Gastrocnemius medialis (tissue), 4 donors: ENCODE measurements at regions of chr11 and their contacts with region 1.

Region 1: GRCh38 chr11:8813658-8814057 is 97.3 kb upstream of the AKIP1 start:
- DNase-seq: peak; percentile 48 to 69
- ATAC-seq: peak; percentile 47 to 75
- H3K4me3 ChIP-seq: no peak overlapping the region
- H3K27ac ChIP-seq: peak overlapping the region; percentile 17 to 57 (median 50)
- H3K4me1 ChIP-seq: peaks cover 24 to 39% of the 10 kb centered on the region in 2 donors
- H3K27me3 ChIP-seq: no peaks in the 10 kb centered on the region
- CTCF ChIP-seq: peak; percentile 71 to 86 (median 76)
- POLR2A ChIP-seq: no peak

Region 2: GRCh38 chr11:8263769-8264410 is 549.8 kb before region 1 on chr11 and contains the start of gene LMO1:
- in situ Hi-C with region 1: no loop called
- intact Hi-C with region 1: loop called (anchors 10 kb)
- DNase-seq: peak; percentile 65 to 72
- ATAC-seq: peak; percentile 50 to 64
- H3K4me3 ChIP-seq: peak within 1 kb of the TSS; percentile 52 to 70 (median 58)
- H3K27ac ChIP-seq: peak within 1 kb of the TSS; percentile 78 to 88 (median 81)
- H3K4me1 ChIP-seq: peaks cover 28 to 35% of the 10 kb centered on the region in 2 donors
- H3K27me3 ChIP-seq: peaks cover 24 to 32% (median 28%) of the 10 kb centered on the region in 3 donors
- CTCF ChIP-seq: peak; percentile 73 to 96 (median 88)
- POLR2A ChIP-seq: peak in 1 of 2 donors; percentile 31
- total RNA-seq, gene LMO1: 2.2 to 7.0 (median 2.5) TPM

Region 3: GRCh38 chr11:8682303-8683114 is 131.1 kb before region 1 on chr11 and contains the starts of genes RPL27A and TRIM66:
- in situ Hi-C with region 1: loop called in 3 of 4 experiments (anchors 5 to 25 kb)
- intact Hi-C with region 1: loop called (anchors 1 kb)
- DNase-seq: peak; percentile 97
- ATAC-seq: peak; percentile 97 to 98
- H3K4me3 ChIP-seq: peak within 1 kb of the TSS; percentile 70 to 100 (median 94)
- H3K27ac ChIP-seq: peak within 1 kb of the TSS; percentile 88 to 99 (median 98)
- H3K4me1 ChIP-seq: peaks cover 25 to 26% of the 10 kb centered on the region in 2 donors
- H3K27me3 ChIP-seq: no peaks in the 10 kb centered on the region
- CTCF ChIP-seq: peak in 3 of 5 experiments; percentile 25 to 31 (median 26)
- POLR2A ChIP-seq: peak; percentile 97 to 99
- total RNA-seq, gene RPL27A: 598 to 693 (median 633) TPM
- total RNA-seq, gene TRIM66: 0.55 to 6.5 (median 1.1) TPM

Region 4: GRCh38 chr11:8699903-8700302 is 113.8 kb before region 1 on chr11:
- in situ Hi-C with region 1: loop called in 2 of 4 experiments (anchors 10 to 25 kb)
- intact Hi-C with region 1: no loop called
- DNase-seq: no peak
- ATAC-seq: no peak
- H3K4me3 ChIP-seq: no peak overlapping the region
- H3K27ac ChIP-seq: peak overlapping the region; percentile 20 to 70 (median 52)
- H3K4me1 ChIP-seq: peaks cover 5 to 11% of the 10 kb centered on the region in 2 donors
- H3K27me3 ChIP-seq: no peaks in the 10 kb centered on the region
- CTCF ChIP-seq: no peak
- POLR2A ChIP-seq: no peak

Region 5: GRCh38 chr11:8717876-8718753 is 95.5 kb before region 1 on chr11:
- in situ Hi-C with region 1: no loop called
- intact Hi-C with region 1: loop called (anchors 5 kb)
- DNase-seq: peak; percentile 15 to 61
- ATAC-seq: peak; percentile 41 to 58
- H3K4me3 ChIP-seq: peak overlapping the region in 1 of 4 donors; percentile 15
- H3K27ac ChIP-seq: peak overlapping the region; percentile 69 to 79 (median 76)
- H3K4me1 ChIP-seq: peaks cover 68 to 69% of the 10 kb centered on the region in 2 donors
- H3K27me3 ChIP-seq: no peaks in the 10 kb centered on the region
- CTCF ChIP-seq: no peak
- POLR2A ChIP-seq: no peak

Region 6: DNA sequence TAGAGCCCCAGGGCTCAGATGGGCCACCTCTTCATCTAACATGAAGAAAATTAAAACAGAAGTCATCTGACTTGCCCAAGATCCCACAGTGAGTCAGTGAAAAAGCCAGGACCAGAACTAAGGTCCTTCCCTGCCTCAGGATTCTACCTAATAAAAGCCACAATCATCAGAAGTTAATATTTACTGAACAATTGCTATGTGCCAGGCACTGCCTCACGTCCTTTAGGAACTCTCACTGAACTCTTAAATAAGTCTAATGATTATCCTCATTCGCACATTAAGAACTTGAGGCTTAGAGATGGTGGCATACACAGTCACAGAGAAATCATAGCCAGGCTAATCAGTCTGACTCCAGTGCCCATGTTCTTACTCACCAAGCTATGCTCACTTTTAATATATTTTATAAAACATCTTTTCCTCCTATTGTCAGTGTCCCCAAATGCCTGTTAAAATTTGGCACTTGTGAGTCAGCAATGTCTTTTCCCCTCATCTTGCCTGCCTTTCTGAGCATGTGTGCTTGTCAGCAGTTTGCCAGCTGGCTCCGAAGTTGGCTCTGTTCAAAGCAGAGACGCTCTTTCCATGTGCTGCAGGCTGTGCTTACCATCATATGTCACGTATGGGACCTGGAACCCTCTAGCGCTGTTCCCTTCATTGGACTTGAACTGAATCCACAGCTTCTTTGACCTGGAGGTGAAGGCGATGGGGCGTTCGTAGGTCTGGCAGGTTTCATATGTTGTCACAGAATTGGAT is 211.6 kb after region 1 on chr11:
- in situ Hi-C with region 1: no loop called
- intact Hi-C with region 1: no loop called
- DNase-seq: no peak
- ATAC-seq: no peak
- H3K4me3 ChIP-seq: no peak overlapping the region
- H3K27ac ChIP-seq: no peak overlapping the region
- H3K4me1 ChIP-seq: no peaks in the 10 kb centered on the region
- H3K27me3 ChIP-seq: no peaks in the 10 kb centered on the region
- CTCF ChIP-seq: no peak
- POLR2A ChIP-seq: no peak